Endothelial cell of umbilical vein (primary cell): ENCODE measurements at regions of chr5 and their contacts with region 1.

Region 1: DNA sequence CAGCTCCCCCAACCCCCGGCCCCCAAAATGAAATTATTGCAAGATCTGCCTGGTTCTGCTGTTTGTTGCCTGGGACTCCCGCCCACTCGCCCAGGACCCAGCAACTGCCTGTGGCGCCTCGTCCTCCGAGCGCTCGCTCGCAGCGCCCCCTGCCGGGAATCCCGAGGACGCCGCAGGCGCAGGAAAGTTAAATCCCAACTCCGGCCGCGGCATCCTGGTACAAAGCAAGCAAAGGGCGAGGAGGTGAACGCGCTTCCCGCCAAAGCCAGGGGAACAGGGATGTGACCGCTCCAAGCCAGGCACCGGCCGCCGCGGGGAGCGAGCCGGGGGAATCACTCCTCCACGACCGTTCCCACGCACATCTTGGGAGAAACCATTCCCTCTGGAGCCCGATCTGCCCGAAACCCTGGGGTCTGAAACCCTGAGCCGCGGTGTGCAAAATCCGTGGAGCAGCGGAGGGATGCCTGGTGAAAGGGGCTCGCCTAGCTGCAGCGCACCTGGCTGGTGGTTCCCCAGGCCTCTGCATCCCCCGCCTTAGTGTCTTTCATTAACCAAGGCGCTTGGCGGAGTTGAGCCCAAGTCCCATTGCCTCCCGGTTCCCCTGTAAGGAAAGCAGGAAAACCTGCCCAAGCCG is 1.3 kb downstream of the SEMA5A start:
- DNase-seq: peak; percentile 48
- H3K4me3 ChIP-seq: no peak overlapping the region
- H3K27ac ChIP-seq: no peak overlapping the region
- H3K4me1 ChIP-seq: peaks cover 3% of the 10 kb centered on the region
- H3K27me3 ChIP-seq: peaks cover 0 to 7% of the 10 kb centered on the region in 2 experiments
- CTCF ChIP-seq: peak; percentile 89 to 91
- POLR2A ChIP-seq: no peak

Region 2: DNA sequence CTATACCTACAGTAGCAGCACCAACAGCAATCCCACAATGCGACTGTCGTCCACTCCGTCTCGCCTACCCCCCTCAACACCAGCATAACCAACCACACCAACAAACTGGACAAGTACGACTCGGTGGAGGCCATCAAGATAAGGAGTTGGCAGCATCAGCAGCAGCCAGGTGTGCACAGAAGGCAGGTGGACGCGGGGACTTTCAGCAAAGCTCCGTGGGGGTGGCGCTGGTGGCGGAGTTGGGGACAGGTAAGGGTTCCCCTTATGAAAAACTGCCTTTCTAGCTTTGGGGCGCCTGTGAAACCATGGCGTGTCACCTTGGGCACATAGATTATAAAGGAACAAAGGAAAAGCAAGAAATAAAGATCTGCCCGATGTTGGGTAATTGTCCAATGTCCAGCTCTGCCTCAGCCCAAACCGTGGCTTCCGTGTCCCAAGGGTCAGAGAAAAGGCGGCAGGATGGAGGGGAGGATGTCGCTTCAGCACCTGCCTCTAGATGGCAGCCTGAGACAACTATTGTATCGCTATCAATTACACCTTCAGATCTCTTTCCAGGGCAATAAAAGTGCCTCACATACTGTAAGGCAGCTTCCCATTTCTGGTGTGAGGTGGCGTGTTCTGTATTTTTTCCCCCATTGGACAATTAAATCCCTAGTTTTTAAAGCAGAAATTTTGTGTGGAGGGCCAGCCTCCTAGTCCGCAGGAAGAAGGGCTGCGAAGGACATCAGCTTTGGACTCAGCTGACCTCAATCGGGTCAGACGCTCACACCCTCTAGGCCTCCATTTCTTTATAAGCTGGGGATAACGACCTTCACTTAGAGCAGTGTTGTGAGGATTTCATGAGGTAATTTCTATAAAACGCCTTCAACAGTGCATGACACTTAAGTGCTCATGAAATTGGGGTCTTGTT is 1616.9 kb before region 1 on chr5:
- CTCF ChIA-PET with region 1: interaction called, 7 read pairs
- POLR2A ChIA-PET with region 1: no interaction called
- dilution Hi-C with region 1: no loop called
- intact Hi-C with region 1: loop called (anchors 1 kb)
- DNase-seq: peak; percentile 36
- H3K4me3 ChIP-seq: no peak overlapping the region
- H3K27ac ChIP-seq: no peak overlapping the region
- H3K4me1 ChIP-seq: no peaks in the 10 kb centered on the region
- H3K27me3 ChIP-seq: no peaks in the 10 kb centered on the region
- CTCF ChIP-seq: peak; percentile 64 to 70
- POLR2A ChIP-seq: no peak

Region 3: DNA sequence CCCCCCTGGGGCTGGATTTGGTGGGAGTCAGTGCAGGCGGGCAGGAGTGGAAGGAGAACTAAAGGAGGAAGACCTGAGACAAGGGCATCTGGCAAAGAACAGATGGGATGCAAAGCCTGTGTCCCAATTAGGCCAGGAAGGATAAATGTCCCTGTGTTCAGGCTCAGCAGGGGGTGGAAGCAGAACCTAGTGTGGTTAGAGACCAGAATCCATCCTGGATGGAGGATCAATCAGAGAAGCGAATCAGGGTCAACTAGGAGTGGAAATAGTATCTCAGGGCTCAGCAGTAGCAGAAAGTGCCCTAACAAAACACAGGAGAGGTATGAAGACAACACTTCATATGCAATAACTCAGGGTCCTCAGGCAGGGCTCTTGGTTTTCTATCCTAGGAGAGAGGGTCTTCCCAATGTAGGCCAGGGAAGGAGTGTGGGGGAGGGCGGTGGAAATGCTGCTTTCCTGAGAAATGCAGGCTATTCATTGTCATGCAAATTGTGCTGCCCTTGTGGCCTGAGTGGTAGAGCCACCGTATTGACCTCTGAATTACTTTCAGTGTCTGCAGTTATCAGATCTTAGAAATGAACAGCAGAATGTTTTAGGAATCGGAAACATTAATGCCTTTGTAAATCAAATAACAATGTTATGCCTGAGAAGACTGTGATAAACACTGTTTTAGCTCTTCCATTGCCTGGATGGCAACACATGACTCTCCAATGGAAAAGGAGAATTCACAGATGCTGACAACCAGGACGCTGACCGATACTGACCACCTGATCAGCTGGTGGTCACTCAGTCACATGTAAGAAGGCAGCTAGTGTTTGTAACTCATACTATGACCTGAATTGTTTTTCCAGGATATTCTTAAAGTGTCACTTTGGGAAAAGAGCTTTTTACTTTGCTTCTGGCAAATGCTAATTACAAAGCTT is 322.3 kb before region 1 on chr5:
- CTCF ChIA-PET with region 1: no interaction called
- POLR2A ChIA-PET with region 1: no interaction called
- dilution Hi-C with region 1: no loop called
- intact Hi-C with region 1: no loop called
- DNase-seq: no peak
- H3K4me3 ChIP-seq: no peak overlapping the region
- H3K27ac ChIP-seq: no peak overlapping the region
- H3K4me1 ChIP-seq: no peaks in the 10 kb centered on the region
- H3K27me3 ChIP-seq: no peaks in the 10 kb centered on the region
- CTCF ChIP-seq: no peak
- POLR2A ChIP-seq: no peak

Region 4: DNA sequence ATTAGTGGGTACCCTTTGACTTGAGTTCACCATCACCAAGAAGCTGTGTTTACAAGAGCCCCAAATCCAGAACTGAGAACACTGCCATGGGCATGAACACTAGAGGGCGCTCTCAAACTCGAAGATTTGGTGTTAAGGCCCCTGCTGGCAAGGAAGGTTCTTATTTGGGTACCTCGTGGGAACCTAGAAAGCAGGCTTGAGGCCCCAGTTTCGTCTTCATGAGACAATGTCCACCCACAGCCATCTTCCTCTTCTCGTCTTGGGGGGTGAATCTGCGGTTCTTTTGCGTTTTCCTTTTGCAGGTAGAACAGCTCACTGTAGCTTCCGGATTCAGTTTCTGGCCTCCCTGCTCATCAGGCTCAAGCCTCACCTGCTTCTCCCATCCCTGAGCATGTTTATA is 182.8 kb before region 1 on chr5:
- CTCF ChIA-PET with region 1: no interaction called
- POLR2A ChIA-PET with region 1: no interaction called
- dilution Hi-C with region 1: no loop called
- intact Hi-C with region 1: loop called (anchors 1 kb)
- DNase-seq: peak; percentile 49
- H3K4me3 ChIP-seq: no peak overlapping the region
- H3K27ac ChIP-seq: no peak overlapping the region
- H3K4me1 ChIP-seq: no peaks in the 10 kb centered on the region
- H3K27me3 ChIP-seq: no peaks in the 10 kb centered on the region
- CTCF ChIP-seq: peak; percentile 44 to 66
- POLR2A ChIP-seq: no peak

Region 5: GRCh38 chr5:10064546-10065195 is 520.1 kb after region 1 on chr5:
- CTCF ChIA-PET with region 1: no interaction called
- POLR2A ChIA-PET with region 1: no interaction called
- dilution Hi-C with region 1: no loop called
- intact Hi-C with region 1: no loop called
- DNase-seq: no peak
- H3K4me3 ChIP-seq: no peak overlapping the region
- H3K27ac ChIP-seq: no peak overlapping the region
- H3K4me1 ChIP-seq: no peaks in the 10 kb centered on the region
- H3K27me3 ChIP-seq: no peaks in the 10 kb centered on the region
- CTCF ChIP-seq: no peak
- POLR2A ChIP-seq: no peak

Region 6: GRCh38 chr5:10233505-10233904 is 688.9 kb after region 1 on chr5:
- CTCF ChIA-PET with region 1: no interaction called
- POLR2A ChIA-PET with region 1: no interaction called
- dilution Hi-C with region 1: no loop called
- intact Hi-C with region 1: loop called (anchors 1 kb)
- DNase-seq: peak; percentile 31
- H3K4me3 ChIP-seq: no peak overlapping the region
- H3K27ac ChIP-seq: no peak overlapping the region
- H3K4me1 ChIP-seq: no peaks in the 10 kb centered on the region
- H3K27me3 ChIP-seq: no peaks in the 10 kb centered on the region
- CTCF ChIP-seq: peak; percentile 19 to 24
- POLR2A ChIP-seq: no peak

Region 7: DNA sequence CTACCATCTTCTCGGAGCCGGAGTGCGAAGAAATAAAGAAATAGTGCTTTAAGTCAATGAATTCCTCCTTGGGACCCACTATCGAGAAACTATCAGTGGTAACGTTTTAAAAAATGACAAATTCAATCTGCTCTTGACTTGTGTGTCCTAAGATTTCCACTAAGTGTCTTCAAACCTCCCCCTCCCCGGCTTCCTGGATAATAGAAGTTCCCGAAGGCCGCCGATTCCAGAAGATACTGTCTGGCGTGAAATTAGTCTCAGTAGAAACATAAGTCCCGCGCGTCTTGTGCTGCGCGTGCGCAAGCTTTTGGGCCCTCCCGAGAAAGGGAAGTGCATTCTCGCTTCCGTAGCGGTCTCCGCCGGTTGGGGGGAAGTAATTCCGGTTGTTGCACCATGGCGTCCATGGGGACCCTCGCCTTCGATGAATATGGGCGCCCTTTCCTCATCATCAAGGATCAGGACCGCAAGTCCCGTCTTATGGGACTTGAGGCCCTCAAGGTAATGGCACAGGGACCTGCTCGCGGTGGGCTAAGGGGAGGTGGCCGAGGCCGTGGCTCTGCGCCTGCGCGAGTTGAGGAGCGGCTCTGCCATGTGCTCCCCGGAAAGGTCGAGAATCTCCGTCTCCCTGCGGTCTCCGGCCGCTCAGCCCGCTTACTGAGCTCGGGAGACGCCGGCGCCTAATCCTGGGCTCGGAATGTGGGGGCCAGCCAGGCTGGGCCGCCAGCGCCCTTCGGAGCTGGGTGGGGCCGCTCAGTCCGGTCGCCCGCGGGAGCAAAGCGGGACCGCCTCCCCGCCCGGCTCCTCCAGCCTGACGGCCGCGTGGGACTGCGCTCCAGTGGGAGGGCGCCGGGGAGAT is 705.6 kb after region 1 on chr5 and contains the start of gene CCT5:
- CTCF ChIA-PET with region 1: no interaction called
- POLR2A ChIA-PET with region 1: no interaction called
- dilution Hi-C with region 1: no loop called
- intact Hi-C with region 1: loop called (anchors 5 kb)
- DNase-seq: peak; percentile 97
- H3K4me3 ChIP-seq: peak within 1 kb of the TSS; percentile 84 to 95 (median 93)
- H3K27ac ChIP-seq: peak within 1 kb of the TSS; percentile 95
- H3K4me1 ChIP-seq: peaks cover 14% of the 10 kb centered on the region
- H3K27me3 ChIP-seq: no peaks in the 10 kb centered on the region
- CTCF ChIP-seq: no peak
- POLR2A ChIP-seq: peak; percentile 77
- total RNA-seq, gene CCT5: 323 and 343 TPM in 2 replicates